ENCODE measurements at regions of chr1 and their contacts with region 1.

Region 1: GRCh38 chr1:27044613-27045151 is 32.0 kb upstream of the TENT5B start:
- DNase-seq: peak; percentile 86 to 92
- ATAC-seq: peak; percentile 88 to 97 (median 94)
- H3K4me3 ChIP-seq: no peak overlapping the region
- H3K27ac ChIP-seq: no peak overlapping the region
- H3K4me1 ChIP-seq: no peaks in the 10 kb centered on the region
- H3K27me3 ChIP-seq: no peaks in the 10 kb centered on the region
- CTCF ChIP-seq: peak; percentile 99

Region 2: GRCh38 chr1:26570287-26570686 is 474.4 kb before region 1 on chr1:
- intact Hi-C with region 1: no loop called
- DNase-seq: no peak
- ATAC-seq: no peak
- H3K4me3 ChIP-seq: no peak overlapping the region
- H3K27ac ChIP-seq: no peak overlapping the region
- H3K4me1 ChIP-seq: no peaks in the 10 kb centered on the region
- H3K27me3 ChIP-seq: no peaks in the 10 kb centered on the region
- CTCF ChIP-seq: no peak

Region 3: GRCh38 chr1:26999440-26999987 is 45.2 kb before region 1 on chr1:
- intact Hi-C with region 1: loop called in 1 of 2 experiments (anchors 2 kb)
- DNase-seq: peak; percentile 59 to 77
- ATAC-seq: peak; percentile 25 to 81 (median 70)
- H3K4me3 ChIP-seq: no peak overlapping the region
- H3K27ac ChIP-seq: peak overlapping the region; percentile 23
- H3K4me1 ChIP-seq: peaks cover 7% of the 10 kb centered on the region
- H3K27me3 ChIP-seq: peaks cover 0 to 20% (median 6%) of the 10 kb centered on the region in 3 donors
- CTCF ChIP-seq: no peak

Region 4: GRCh38 chr1:27097484-27097917 is 52.8 kb after region 1 on chr1:
- intact Hi-C with region 1: loop called (anchors 1 to 2 kb)
- DNase-seq: peak; percentile 75 to 86
- ATAC-seq: peak; percentile 83 to 91 (median 86)
- H3K4me3 ChIP-seq: no peak overlapping the region
- H3K27ac ChIP-seq: no peak overlapping the region
- H3K4me1 ChIP-seq: no peaks in the 10 kb centered on the region
- H3K27me3 ChIP-seq: no peaks in the 10 kb centered on the region
- CTCF ChIP-seq: peak; percentile 95

Measured in psoas muscle (tissue), 8 donors.